ENCODE measurements at regions of chr9 and their contacts with region 1.

Region 1: GRCh38 chr9:115883457-115884329 is 269.9 kb upstream of the PAPPA start:
- DNase-seq: peak; percentile 66
- H3K4me3 ChIP-seq: no peak overlapping the region
- H3K27ac ChIP-seq: no peak overlapping the region
- H3K4me1 ChIP-seq: no peaks in the 10 kb centered on the region
- H3K27me3 ChIP-seq: no peaks in the 10 kb centered on the region
- CTCF ChIP-seq: peak; percentile 74 to 86

Region 2: GRCh38 chr9:116075191-116075590 is 191.5 kb after region 1 on chr9:
- CTCF ChIA-PET with region 1: no interaction called
- dilution Hi-C with region 1: no loop called
- in situ Hi-C with region 1: no loop called
- intact Hi-C with region 1: no loop called
- DNase-seq: peak; percentile 75
- H3K4me3 ChIP-seq: no peak overlapping the region
- H3K27ac ChIP-seq: peak overlapping the region; percentile 6
- H3K4me1 ChIP-seq: peaks cover 26% of the 10 kb centered on the region
- H3K27me3 ChIP-seq: no peaks in the 10 kb centered on the region
- CTCF ChIP-seq: no peak

Region 3: GRCh38 chr9:116112236-116112635 is 228.5 kb after region 1 on chr9:
- CTCF ChIA-PET with region 1: no interaction called
- dilution Hi-C with region 1: no loop called
- in situ Hi-C with region 1: loop called in 1 of 2 experiments (anchors 25 kb)
- intact Hi-C with region 1: loop called (anchors 1 kb)
- DNase-seq: peak; percentile 25
- H3K4me3 ChIP-seq: no peak overlapping the region
- H3K27ac ChIP-seq: no peak overlapping the region
- H3K4me1 ChIP-seq: no peaks in the 10 kb centered on the region
- H3K27me3 ChIP-seq: no peaks in the 10 kb centered on the region
- CTCF ChIP-seq: peak; percentile 49 to 57

Region 4: DNA sequence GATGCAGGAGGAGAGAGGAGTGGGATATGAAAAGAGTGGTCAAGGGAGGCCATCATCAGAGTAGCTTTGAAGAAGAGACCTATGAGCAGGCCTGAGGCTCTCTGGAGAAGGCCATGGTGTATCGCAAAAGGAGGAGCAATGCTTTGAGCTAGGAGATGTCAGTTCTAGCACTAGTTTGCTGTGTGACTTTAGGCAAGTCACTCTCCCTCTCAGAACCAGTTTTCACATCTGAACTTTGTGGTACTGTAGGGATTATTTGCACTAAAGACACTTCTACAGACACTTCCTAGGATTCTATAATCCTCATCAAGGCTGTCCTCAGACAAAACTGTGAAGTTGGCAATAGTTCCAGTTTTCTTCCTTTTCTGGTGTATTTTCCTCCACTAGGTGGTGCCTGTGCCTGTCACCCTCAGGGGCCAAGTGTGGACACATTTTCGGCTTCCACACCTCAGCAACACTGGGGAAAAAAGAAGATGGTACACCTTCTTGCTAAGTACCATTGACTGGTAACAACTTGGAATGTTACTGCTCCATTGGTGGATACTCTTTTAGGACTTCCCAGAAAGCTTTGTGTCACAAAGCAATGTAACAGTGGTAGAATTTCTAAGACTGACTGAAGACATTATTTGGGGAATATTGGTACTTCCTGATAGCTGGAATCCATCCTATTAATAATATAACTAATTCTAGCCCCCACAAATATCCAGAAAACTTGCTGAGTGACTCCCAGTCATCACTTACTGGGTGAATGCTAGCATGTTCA is 279.8 kb after region 1 on chr9:
- CTCF ChIA-PET with region 1: no interaction called
- dilution Hi-C with region 1: no loop called
- in situ Hi-C with region 1: no loop called
- intact Hi-C with region 1: loop called (anchors 1 kb)
- DNase-seq: no peak
- H3K4me3 ChIP-seq: no peak overlapping the region
- H3K27ac ChIP-seq: no peak overlapping the region
- H3K4me1 ChIP-seq: no peaks in the 10 kb centered on the region
- H3K27me3 ChIP-seq: no peaks in the 10 kb centered on the region
- CTCF ChIP-seq: peak; percentile 52

Region 5: GRCh38 chr9:116572095-116572748 is 688.5 kb after region 1 on chr9:
- CTCF ChIA-PET with region 1: interaction called, 3 read pairs
- dilution Hi-C with region 1: no loop called
- in situ Hi-C with region 1: loop called in 1 of 2 experiments (anchors 25 kb)
- intact Hi-C with region 1: loop called (anchors 1 kb)
- DNase-seq: peak; percentile 48
- H3K4me3 ChIP-seq: no peak overlapping the region
- H3K27ac ChIP-seq: no peak overlapping the region
- H3K4me1 ChIP-seq: no peaks in the 10 kb centered on the region
- H3K27me3 ChIP-seq: no peaks in the 10 kb centered on the region
- CTCF ChIP-seq: peak; percentile 90 to 96

Region 6: GRCh38 chr9:116661037-116661954 is 777.6 kb after region 1 on chr9:
- CTCF ChIA-PET with region 1: no interaction called
- dilution Hi-C with region 1: no loop called
- in situ Hi-C with region 1: no loop called
- intact Hi-C with region 1: loop called (anchors 5 kb)
- DNase-seq: peak; percentile 67
- H3K4me3 ChIP-seq: no peak overlapping the region
- H3K27ac ChIP-seq: peak overlapping the region; percentile 32
- H3K4me1 ChIP-seq: peaks cover 20% of the 10 kb centered on the region
- H3K27me3 ChIP-seq: no peaks in the 10 kb centered on the region
- CTCF ChIP-seq: peak; percentile 75 to 82

Measured in mammary epithelial cell (primary cell).